Endothelial cell of umbilical vein (primary cell): ENCODE measurements at regions of chr1 and their contacts with region 1.

Region 1: GRCh38 chr1:235415008-235415904 is 48.0 kb downstream of the TBCE start:
- DNase-seq: peak; percentile 70
- H3K4me3 ChIP-seq: no peak overlapping the region
- H3K27ac ChIP-seq: no peak overlapping the region
- H3K4me1 ChIP-seq: no peaks in the 10 kb centered on the region
- H3K27me3 ChIP-seq: no peaks in the 10 kb centered on the region
- CTCF ChIP-seq: peak; percentile 71 to 80
- POLR2A ChIP-seq: no peak

Region 2: DNA sequence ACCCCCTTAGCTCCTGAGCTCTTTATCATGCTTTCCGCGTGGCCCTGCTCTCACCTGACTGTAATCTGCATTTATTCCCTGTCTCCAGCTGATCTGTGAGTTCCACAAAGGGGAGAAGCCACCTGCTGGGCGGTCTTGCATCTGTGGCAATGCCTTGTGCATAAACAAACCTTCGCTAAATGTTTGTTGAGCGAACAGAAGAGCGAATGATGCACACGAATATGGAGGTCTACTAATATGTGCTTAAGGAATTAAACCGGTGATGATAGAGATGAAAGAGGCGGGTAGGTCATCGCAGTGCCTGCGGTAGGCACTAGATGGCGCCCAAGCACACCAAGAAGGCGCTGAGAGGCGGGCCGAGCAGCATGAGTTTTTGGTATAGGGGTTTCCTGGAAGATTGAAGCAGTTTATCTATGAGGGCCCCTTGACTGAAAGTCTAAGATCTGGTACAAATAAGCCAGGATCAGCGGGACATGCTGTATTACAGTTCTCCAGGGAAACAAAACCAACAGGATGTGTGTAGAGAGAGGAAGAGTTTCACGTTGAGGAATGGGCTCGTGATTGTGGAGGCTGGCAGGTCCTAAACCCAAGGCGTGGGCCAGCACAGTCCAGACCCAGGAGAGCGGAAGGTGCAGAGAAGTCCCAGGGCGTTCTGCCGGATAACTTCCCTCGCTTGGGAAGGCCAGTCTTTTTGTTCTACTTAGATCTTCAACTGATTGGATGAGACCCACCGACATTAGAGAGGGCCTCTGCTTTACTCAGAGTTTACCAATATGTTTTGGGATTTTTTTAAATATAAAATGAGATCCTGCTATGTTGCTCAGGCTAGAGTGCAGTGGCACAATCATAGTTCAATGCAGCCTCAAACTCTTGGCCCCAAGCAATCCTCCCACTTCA is 321.3 kb before region 1 on chr1:
- CTCF ChIA-PET with region 1: interaction called, 12 read pairs
- POLR2A ChIA-PET with region 1: no interaction called
- dilution Hi-C with region 1: no loop called
- intact Hi-C with region 1: loop called (anchors 2 kb)
- DNase-seq: peak; percentile 78
- H3K4me3 ChIP-seq: no peak overlapping the region
- H3K27ac ChIP-seq: no peak overlapping the region
- H3K4me1 ChIP-seq: no peaks in the 10 kb centered on the region
- H3K27me3 ChIP-seq: peaks cover 0 to 3% of the 10 kb centered on the region in 2 experiments
- CTCF ChIP-seq: peak; percentile 93
- POLR2A ChIP-seq: no peak

Region 3: DNA sequence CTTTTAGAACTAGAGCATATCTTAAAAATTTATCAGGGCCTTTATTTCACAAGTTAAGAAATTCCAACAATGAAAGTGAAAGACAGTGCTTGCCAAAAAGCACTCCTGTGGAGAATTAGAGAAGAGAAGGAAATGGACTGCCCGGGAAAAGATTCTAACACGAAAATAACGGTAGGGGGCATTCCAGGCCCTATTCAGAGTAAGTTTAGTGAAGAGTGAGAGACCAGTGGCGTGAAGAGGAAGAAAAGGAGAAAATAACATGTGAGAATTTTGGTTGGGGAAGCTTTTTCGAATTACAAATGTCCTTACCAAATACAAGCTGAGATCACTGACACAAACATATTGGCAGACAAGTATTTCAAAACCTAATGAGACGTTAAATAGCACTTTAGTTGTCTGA is 215.8 kb before region 1 on chr1:
- CTCF ChIA-PET with region 1: interaction called, 10 read pairs
- POLR2A ChIA-PET with region 1: no interaction called
- dilution Hi-C with region 1: no loop called
- intact Hi-C with region 1: loop called (anchors 1 kb)
- DNase-seq: peak; percentile 60
- H3K4me3 ChIP-seq: no peak overlapping the region
- H3K27ac ChIP-seq: no peak overlapping the region
- H3K4me1 ChIP-seq: no peaks in the 10 kb centered on the region
- H3K27me3 ChIP-seq: no peaks in the 10 kb centered on the region
- CTCF ChIP-seq: peak; percentile 31 to 40
- POLR2A ChIP-seq: no peak

Region 4: DNA sequence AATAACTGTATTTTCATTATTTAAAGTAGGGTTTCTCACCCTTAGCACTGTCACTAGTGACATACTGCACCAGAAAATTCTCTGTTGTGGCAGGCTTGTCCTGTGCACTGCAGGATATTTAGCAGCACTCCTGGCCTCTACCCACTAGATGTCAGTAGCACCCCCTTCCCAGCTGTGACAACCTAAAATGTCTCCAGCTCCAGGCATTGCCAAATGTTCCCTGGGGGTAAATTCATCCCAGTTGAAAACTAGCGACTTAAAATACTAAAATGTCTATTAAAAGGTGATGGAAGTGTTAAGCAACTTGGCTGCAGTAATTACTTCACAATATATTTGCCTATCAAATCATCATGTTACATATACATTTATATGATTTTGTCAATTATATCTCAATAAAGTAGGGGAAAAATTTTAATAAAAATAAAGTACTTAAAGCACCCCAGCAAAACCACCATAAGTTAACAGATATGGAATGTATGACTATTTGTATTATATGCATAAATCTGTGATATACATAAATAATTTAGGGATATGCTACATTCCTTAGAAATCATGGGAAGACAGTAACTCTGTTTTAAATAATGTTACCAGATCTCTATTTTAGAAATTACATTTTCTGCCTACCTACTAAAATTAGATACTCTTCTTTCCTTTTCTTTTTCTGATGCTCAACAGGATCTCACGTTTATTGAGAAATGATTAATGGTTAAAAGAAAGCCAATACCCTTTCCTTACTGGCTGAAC is 161.9 kb before region 1 on chr1:
- CTCF ChIA-PET with region 1: interaction called, 107 read pairs
- POLR2A ChIA-PET with region 1: no interaction called
- dilution Hi-C with region 1: no loop called
- intact Hi-C with region 1: loop called (anchors 1 kb)
- DNase-seq: peak; percentile 71
- H3K4me3 ChIP-seq: no peak overlapping the region
- H3K27ac ChIP-seq: no peak overlapping the region
- H3K4me1 ChIP-seq: no peaks in the 10 kb centered on the region
- H3K27me3 ChIP-seq: no peaks in the 10 kb centered on the region
- CTCF ChIP-seq: peak; percentile 74 to 81
- POLR2A ChIP-seq: no peak

Region 5: DNA sequence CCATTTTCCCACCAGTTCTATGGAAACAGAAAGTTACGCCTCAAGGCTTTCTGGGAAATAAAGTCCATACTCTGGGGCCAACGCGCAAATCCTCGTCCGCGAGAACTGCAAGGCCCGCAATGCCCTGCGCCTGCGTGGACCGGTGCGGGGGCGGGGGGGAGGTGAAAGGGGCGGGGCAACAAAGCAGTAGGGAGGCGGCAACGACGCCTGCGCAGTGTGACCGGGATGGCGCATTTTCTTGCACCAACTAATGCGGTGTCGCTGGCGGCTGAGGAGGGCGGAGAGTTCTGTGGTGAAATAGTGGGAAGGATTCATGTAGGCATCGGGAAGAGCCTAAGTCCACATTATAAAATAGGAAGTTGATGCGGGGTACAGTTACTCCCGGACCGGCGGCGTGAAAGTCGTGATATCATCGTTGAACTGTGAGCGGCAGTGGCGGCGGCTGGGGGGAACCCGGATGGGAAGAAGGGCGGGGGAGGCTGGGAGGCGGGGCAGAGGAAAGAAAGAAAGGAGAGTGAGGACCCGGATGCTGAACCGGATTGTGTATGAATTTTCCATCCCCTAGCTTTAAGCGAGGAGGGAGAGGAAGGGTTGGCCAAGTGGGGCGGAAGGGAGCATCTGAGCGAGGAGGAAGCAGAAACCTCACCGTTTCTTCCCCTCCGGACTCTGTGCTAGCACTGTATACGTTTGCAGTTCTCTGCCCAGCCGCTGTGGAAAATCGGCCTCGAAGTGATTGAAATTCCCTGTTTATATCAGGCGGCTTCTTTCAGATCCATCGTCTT is 86.7 kb before region 1 on chr1 and contains the start of gene GGPS1:
- CTCF ChIA-PET with region 1: interaction called, 56 read pairs
- POLR2A ChIA-PET with region 1: interaction called, 3 read pairs
- dilution Hi-C with region 1: no loop called
- intact Hi-C with region 1: loop called (anchors 1 kb)
- DNase-seq: peak; percentile 100
- H3K4me3 ChIP-seq: peak within 1 kb of the TSS; percentile 89 to 93 (median 92)
- H3K27ac ChIP-seq: peak within 1 kb of the TSS; percentile 86
- H3K4me1 ChIP-seq: peaks cover 28% of the 10 kb centered on the region
- H3K27me3 ChIP-seq: no peaks in the 10 kb centered on the region
- CTCF ChIP-seq: no peak
- POLR2A ChIP-seq: peak; percentile 96
- total RNA-seq, gene GGPS1: 24.8 and 29.5 TPM in 2 replicates

Region 6: DNA sequence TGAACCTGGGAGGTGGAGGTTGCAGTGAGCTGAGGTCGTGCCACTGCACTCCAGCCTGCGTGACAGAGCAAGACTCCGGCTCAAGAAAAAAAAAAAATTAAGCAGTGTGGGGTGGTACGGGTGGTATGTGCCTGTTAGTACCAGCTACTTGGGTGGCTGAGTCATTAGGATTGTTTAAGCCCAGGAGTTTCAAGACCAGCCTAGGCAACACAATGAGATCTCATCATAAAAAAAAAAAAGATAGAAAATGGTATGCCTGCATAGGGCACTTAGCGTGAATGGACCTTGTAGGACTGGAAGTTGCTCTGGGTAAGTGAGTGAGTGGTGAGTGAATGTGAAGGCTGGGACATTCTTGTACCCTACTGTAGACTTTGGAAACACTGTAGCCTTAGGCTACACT is 11.1 kb before region 1 on chr1:
- CTCF ChIA-PET with region 1: interaction called, 21 read pairs
- POLR2A ChIA-PET with region 1: no interaction called
- dilution Hi-C with region 1: no loop called
- intact Hi-C with region 1: no loop called
- DNase-seq: no peak
- H3K4me3 ChIP-seq: no peak overlapping the region
- H3K27ac ChIP-seq: no peak overlapping the region
- H3K4me1 ChIP-seq: no peaks in the 10 kb centered on the region
- H3K27me3 ChIP-seq: no peaks in the 10 kb centered on the region
- CTCF ChIP-seq: no peak
- POLR2A ChIP-seq: no peak

Region 7: GRCh38 chr1:235781807-235782206 is 366.6 kb after region 1 on chr1:
- CTCF ChIA-PET with region 1: no interaction called
- POLR2A ChIA-PET with region 1: no interaction called
- dilution Hi-C with region 1: no loop called
- intact Hi-C with region 1: no loop called
- DNase-seq: peak; percentile 67
- H3K4me3 ChIP-seq: no peak overlapping the region
- H3K27ac ChIP-seq: no peak overlapping the region
- H3K4me1 ChIP-seq: no peaks in the 10 kb centered on the region
- H3K27me3 ChIP-seq: no peaks in the 10 kb centered on the region
- CTCF ChIP-seq: no peak
- POLR2A ChIP-seq: no peak